Activated CD4-positive, alpha-beta T cell treated with anti-CD3 and anti-CD28 coated beads, Interleukin-2, amount 10 ng/mL, durations not matched to agents 24 days and 14 days (primary cell): ENCODE measurements at regions of chr12 and their contacts with region 1.

Region 1: GRCh38 chr12:98593351-98594049 is at the start of gene SLC25A3:
- DNase-seq: peak; percentile 98
- H3K4me3 Mint-ChIP-seq: peak within 1 kb of the TSS; percentile 98
- H3K27ac Mint-ChIP-seq: peak within 1 kb of the TSS; percentile 99
- H3K4me1 Mint-ChIP-seq: peaks cover 19% of the 10 kb centered on the region
- H3K27me3 Mint-ChIP-seq: peaks cover 1% of the 10 kb centered on the region
- total RNA-seq, gene SLC25A3: 598 and 612 TPM in 2 replicates

Region 2: GRCh38 chr12:98137278-98137677 is 456.2 kb before region 1 on chr12:
- intact Hi-C with region 1: no loop called
- DNase-seq: no peak
- H3K4me3 Mint-ChIP-seq: no peak overlapping the region
- H3K27ac Mint-ChIP-seq: no peak overlapping the region
- H3K4me1 Mint-ChIP-seq: no peaks in the 10 kb centered on the region
- H3K27me3 Mint-ChIP-seq: no peaks in the 10 kb centered on the region

Region 3: DNA sequence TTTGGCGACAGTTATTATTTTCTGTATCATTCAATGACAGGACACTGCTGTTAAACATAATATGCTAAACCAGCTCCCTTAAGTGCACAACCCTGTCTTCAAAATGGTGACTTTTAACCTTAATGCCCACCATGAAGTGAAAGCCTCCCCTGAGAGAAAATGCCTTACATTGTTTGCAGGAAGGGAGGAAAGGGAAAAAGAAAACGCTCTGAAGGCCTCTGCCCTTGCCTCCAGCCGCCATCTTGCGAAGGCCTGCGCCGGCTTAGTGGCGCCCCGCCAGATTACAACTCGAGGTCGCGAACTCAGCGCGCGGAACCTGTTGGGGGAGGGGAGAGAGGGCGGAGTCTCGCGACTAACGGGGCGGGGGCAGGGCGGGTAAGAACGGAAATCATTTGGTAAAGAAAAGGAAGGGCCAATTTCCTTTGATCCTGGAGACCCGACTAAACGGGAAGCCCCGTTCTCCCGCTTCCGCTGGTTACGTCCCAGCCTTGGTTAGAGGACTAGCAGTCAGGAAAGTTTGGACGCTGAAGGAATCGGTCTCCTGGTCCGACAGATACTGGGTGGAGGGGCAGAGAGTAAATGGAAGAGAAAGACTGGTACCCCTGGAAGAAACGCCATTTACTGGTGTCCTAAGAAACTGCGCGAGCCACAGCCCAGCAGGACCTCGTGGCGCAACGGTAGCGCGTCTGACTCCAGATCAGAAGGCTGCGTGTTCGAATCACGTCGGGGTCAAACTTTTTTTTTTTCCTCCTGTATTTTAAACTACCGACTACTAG is 89.7 kb before region 1 on chr12:
- intact Hi-C with region 1: loop called (anchors 1 kb)
- DNase-seq: peak; percentile 97
- H3K4me3 Mint-ChIP-seq: peak overlapping the region; percentile 92
- H3K27ac Mint-ChIP-seq: peak overlapping the region; percentile 99
- H3K4me1 Mint-ChIP-seq: peaks cover 26% of the 10 kb centered on the region
- H3K27me3 Mint-ChIP-seq: peaks cover 7% of the 10 kb centered on the region

Region 4: DNA sequence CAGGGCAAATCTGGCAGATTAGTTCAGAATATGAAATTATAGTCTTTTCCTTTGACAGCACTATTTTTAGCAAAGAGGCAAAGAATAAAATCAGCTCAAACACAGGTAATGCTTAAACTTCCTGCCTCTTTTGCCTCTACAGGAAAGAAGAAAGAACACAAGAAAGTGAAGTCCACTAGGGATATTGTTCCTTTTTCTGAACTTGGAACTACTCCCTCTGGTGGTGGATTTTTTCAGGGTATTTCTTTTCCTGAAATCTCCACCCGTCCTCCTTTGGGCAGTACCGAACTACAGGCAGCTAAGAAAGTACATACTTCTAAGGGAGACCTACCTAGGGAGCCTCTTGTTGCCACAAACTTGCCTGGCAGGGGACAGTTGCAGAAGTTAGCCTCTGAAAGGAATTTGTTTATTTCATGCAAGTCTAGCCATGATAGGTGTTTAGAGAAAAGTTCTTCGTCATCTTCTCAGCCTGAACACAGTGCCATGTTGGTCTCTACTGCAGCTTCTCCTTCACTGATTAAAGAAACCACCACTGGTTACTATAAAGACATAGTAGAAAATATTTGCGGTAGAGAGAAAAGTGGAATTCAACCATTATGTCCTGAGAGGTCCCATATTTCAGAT is 60.7 kb before region 1 on chr12:
- intact Hi-C with region 1: loop called (anchors 5 kb)
- DNase-seq: peak; percentile 78
- H3K4me3 Mint-ChIP-seq: no peak overlapping the region
- H3K27ac Mint-ChIP-seq: peak overlapping the region; percentile 52
- H3K4me1 Mint-ChIP-seq: peaks cover 22% of the 10 kb centered on the region
- H3K27me3 Mint-ChIP-seq: no peaks in the 10 kb centered on the region

Region 5: GRCh38 chr12:98572010-98572409 is 21.5 kb before region 1 on chr12:
- intact Hi-C with region 1: loop called (anchors 2 kb)
- DNase-seq: no peak
- H3K4me3 Mint-ChIP-seq: no peak overlapping the region
- H3K27ac Mint-ChIP-seq: no peak overlapping the region
- H3K4me1 Mint-ChIP-seq: no peaks in the 10 kb centered on the region
- H3K27me3 Mint-ChIP-seq: peaks cover 2% of the 10 kb centered on the region

Region 6: DNA sequence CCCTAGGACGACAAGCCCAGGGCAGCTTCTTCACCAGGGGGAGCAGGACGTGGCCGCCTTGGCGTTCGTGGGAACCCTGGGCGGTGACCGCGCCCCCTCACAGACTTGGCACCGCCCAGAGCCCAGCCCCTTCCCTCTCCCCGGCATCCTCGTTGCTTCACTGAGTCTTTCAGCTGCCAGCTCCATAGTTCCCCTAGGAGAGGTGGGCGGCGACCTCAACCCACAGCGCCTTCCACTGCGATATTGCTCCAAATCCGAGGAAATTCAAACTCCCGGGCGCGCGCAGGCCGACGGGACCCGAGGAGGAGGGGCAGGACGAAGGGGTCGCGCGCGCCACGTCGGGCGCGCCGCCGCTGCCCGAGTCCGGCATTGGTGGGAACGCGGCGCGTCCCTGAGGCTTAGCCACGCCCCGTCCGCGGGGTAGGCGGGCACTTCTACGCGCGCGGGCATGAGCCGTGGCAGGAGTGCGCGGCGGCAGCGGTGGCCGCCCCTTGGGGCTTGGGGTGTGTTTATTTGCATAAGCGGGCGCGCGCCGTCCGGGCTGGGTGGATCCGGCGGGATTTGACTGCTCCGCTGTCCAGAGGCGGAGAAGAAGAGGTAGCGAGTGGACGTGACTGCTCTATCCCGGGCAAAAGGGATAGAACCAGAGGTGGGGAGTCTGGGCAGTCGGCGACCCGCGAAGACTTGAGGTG is 51.4 kb after region 1 on chr12 and contains the starts of genes APAF1 and IKBIP:
- intact Hi-C with region 1: loop called (anchors 1 kb)
- DNase-seq: peak; percentile 99
- H3K4me3 Mint-ChIP-seq: peak within 1 kb of the TSS; percentile 92
- H3K27ac Mint-ChIP-seq: peak within 1 kb of the TSS; percentile 95
- H3K4me1 Mint-ChIP-seq: peaks cover 21% of the 10 kb centered on the region
- H3K27me3 Mint-ChIP-seq: no peaks in the 10 kb centered on the region
- total RNA-seq, gene APAF1: 19.9 and 20.7 TPM in 2 replicates
- total RNA-seq, gene IKBIP: 35.0 and 36.9 TPM in 2 replicates

Region 7: DNA sequence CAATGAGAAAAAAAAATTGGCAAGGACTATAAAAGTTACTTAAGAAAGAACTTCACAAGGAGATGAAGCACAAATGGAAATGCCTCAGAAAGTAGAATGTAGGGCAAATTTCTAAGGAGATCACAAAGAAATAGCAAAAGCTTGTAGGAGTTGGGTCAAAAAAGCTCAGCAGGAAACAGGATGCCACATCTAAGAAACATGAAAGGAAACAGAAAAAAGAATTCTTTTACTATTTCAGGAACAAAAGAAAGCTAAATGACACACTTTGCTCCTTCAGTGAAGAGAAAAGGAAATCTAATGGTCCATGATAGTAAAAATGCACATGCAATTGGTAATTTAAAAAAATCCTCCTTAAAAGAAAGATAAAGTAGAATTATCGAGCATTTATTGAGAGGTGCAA is 602.0 kb after region 1 on chr12:
- intact Hi-C with region 1: no loop called
- DNase-seq: no peak
- H3K4me3 Mint-ChIP-seq: no peak overlapping the region
- H3K27ac Mint-ChIP-seq: no peak overlapping the region
- H3K4me1 Mint-ChIP-seq: no peaks in the 10 kb centered on the region
- H3K27me3 Mint-ChIP-seq: no peaks in the 10 kb centered on the region